GM10248 (cell line): ENCODE measurements at regions of chr14 and their contacts with region 1.

Region 1: GRCh38 chr14:106518054-106518943 is 991.9 kb downstream of the TMEM121 start:
- DNase-seq: peak; percentile 29
- CTCF ChIP-seq: peak; percentile 80

Region 2: GRCh38 chr14:106501898-106502297 is 16.4 kb before region 1 on chr14:
- CTCF ChIA-PET with region 1: interaction called, 38 read pairs
- POLR2A ChIA-PET with region 1: no interaction called
- DNase-seq: no peak
- CTCF ChIP-seq: no peak